IMR-90 (cell line): ENCODE measurements at regions of chr20 and their contacts with region 1.

Region 1: DNA sequence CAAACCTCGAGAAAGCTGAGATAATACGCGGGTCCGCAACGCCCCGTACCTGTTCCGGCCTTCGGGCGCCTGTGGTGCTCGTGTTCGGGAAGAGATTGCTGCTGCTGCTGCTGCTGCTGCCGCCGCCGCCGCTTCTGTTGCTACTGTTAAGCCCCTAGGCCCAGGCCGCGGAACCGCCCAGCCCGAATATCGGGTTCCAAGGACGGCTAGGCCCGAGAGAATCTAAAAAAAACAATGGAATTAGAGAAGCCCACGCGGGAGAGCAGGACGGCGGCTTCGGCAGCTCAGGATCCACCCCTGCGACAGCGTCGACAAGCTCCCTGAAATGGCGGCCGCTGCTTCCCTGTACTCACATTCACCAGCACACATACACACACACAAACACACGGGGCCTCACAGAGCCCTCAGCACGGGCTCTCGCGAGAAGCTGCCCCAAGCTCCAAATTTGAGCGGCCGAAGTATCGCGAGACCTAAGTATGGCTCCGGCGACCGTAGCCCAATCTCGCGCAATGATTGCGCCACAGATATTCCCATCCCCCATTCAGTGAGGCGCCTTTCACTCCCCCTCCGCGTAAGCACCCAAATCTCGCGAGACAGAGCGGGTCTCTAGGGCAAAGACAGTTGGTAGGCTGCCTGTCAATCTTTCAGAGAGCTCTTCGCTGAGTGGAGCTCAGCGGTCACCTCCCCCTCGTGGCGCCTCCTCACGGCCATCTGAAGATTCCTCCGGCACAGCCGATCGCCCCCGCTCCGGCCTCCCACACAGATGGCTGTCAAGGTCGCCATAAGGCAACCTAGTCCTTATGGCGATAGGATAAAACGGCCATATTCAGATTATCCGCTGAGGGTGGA is at the start of gene RBM39:
- DNase-seq: peak; percentile 100
- ATAC-seq: peak; percentile 93
- H3K4me3 ChIP-seq: peak within 1 kb of the TSS; percentile 74
- H3K27ac ChIP-seq: peak within 1 kb of the TSS; percentile 96
- H3K4me1 ChIP-seq: peaks cover 7% of the 10 kb centered on the region
- H3K27me3 ChIP-seq: no peaks in the 10 kb centered on the region
- CTCF ChIP-seq: peak; percentile 49
- POLR2A ChIP-seq: peak; percentile 98
- RAD21 ChIP-seq: no peak
- total RNA-seq, gene RBM39: 166 and 280 TPM in 2 replicates

Region 2: GRCh38 chr20:34516247-34517113 is 1225.6 kb before region 1 on chr20 and contains the start of gene DYNLRB1:
- CTCF ChIA-PET with region 1: no interaction called
- POLR2A ChIA-PET with region 1: no interaction called
- dilution Hi-C with region 1: no loop called
- in situ Hi-C with region 1: no loop called
- intact Hi-C with region 1: no loop called
- DNase-seq: peak; percentile 96
- ATAC-seq: peak; percentile 89
- H3K4me3 ChIP-seq: peak within 1 kb of the TSS; percentile 89
- H3K27ac ChIP-seq: peak within 1 kb of the TSS; percentile 95
- H3K4me1 ChIP-seq: peaks cover 7% of the 10 kb centered on the region; the same call in 1 of the 2 replicates
- H3K27me3 ChIP-seq: no peaks in the 10 kb centered on the region
- CTCF ChIP-seq: no peak
- POLR2A ChIP-seq: peak; percentile 90
- RAD21 ChIP-seq: no peak
- total RNA-seq, gene DYNLRB1: 78.0 and 82.4 TPM in 2 replicates

Region 3: DNA sequence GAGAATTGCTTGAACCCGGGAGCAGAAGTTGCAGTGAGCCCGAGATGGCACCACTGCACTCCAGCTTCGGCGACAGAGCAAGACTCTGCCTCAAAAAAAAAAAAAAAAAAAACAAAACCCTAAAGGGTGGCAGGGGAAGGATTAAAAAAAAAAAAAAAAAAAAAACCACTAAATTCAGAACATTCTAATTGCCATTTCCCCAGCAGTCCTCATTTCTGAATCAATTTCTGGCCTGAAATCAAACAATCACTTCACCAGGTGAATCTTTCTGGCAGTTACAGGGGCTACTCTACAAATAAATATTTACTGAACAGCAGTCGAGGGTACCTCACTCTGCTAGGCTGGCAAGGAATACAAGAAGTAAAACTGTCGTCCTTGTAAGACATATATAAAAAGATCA is 331.5 kb before region 1 on chr20:
- CTCF ChIA-PET with region 1: no interaction called
- POLR2A ChIA-PET with region 1: no interaction called
- dilution Hi-C with region 1: no loop called
- in situ Hi-C with region 1: no loop called
- intact Hi-C with region 1: no loop called
- DNase-seq: no peak
- ATAC-seq: no peak
- H3K4me3 ChIP-seq: peak overlapping the region; percentile 82; the same call in 1 of the 2 replicates
- H3K27ac ChIP-seq: no peak overlapping the region
- H3K4me1 ChIP-seq: no peaks in the 10 kb centered on the region
- H3K27me3 ChIP-seq: no peaks in the 10 kb centered on the region
- CTCF ChIP-seq: no peak
- POLR2A ChIP-seq: no peak
- RAD21 ChIP-seq: no peak

Region 4: DNA sequence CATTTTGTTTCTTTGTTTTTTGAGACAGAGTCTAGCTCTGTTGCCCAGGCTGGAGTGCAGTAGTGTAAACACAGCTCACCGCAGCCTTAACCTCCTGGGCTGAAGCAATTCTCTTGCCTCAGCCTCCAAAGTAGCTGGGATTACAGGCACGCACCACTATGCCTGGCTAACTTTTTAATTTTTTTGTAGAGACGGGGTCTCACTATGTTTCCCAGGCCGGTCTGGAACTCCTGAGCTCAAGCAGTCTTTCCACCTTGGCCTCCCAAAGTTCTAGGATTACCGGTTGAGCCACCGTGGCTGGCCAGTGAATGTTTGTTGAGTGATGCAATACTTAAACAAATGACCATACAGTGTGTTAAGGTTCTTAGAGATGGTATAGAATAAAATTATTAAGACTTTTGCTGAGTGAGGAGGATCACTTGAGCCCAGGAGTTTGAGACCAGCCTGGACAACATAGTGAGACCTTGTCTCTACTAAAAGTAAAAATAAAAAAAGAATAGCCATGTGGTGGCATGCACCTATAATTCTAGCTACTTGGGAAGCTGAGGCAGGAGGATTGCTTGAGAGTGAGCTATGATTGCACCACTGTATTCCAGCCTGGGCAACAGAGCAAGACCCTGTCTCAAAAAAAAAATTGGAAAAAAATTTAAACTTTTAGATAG is 273.3 kb before region 1 on chr20:
- CTCF ChIA-PET with region 1: no interaction called
- POLR2A ChIA-PET with region 1: no interaction called
- dilution Hi-C with region 1: no loop called
- in situ Hi-C with region 1: no loop called
- intact Hi-C with region 1: no loop called
- DNase-seq: peak; percentile 39
- ATAC-seq: 0 out of 2 replicates have a peak, but pooled peaks have one; percentile 27
- H3K4me3 ChIP-seq: no peak overlapping the region
- H3K27ac ChIP-seq: no peak overlapping the region
- H3K4me1 ChIP-seq: peaks cover 13% of the 10 kb centered on the region
- H3K27me3 ChIP-seq: no peaks in the 10 kb centered on the region
- CTCF ChIP-seq: no peak
- POLR2A ChIP-seq: no peak
- RAD21 ChIP-seq: no peak

Region 5: DNA sequence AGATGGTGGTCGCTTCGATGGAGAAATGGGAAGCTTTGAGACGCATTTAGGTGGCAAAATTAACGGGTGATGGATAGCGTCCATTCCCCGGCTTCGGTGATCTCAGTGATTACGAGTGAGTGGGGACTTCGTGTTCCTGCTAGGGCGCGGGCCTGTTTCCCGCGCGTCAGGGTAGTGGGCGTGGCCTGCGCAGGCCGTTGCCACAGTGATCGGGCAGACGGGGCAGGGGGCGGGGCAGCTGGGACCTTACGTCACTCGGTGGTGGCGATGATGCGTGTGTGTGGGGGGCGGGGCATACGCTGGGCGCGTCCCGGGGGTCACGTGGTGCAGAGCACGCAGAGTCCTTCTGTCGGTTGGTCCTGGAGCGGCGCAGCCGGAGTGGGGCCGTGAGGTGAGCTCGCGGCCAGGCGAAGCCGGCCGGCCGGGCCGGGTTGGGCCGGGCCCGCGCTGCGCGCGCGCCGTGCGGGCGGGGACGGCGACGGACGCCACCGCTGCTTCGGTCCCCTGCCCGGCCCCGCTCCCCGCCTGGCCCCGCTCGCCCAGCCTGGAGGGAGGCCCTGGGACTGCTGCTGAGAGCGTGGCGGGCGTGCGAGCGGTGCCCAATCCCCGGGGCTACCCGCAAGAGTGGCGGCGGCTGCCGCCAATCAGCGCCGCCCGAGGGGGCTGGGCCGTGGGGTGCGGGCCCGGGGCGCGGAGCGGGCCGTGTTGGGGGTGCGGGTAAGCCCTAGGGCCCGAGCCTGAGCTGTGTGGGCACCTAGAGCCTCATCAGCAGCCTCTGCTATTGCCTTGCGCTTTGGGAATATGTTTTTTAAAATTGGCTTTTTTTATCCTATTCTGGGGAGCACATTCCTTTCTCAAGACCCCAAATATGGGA is 29.8 kb after region 1 on chr20 and contains the start of gene PHF20:
- CTCF ChIA-PET with region 1: interaction called, 4 read pairs
- POLR2A ChIA-PET with region 1: interaction called, 13 read pairs
- dilution Hi-C with region 1: no loop called
- in situ Hi-C with region 1: no loop called
- intact Hi-C with region 1: loop called (anchors 2 kb)
- DNase-seq: peak; percentile 96
- ATAC-seq: peak; percentile 93
- H3K4me3 ChIP-seq: peak within 1 kb of the TSS; percentile 94
- H3K27ac ChIP-seq: peak within 1 kb of the TSS; percentile 79
- H3K4me1 ChIP-seq: peaks cover 21% of the 10 kb centered on the region
- H3K27me3 ChIP-seq: no peaks in the 10 kb centered on the region
- CTCF ChIP-seq: no peak
- POLR2A ChIP-seq: peak; percentile 84
- RAD21 ChIP-seq: no peak
- total RNA-seq, gene PHF20: 22.0 and 30.3 TPM in 2 replicates

Region 6: DNA sequence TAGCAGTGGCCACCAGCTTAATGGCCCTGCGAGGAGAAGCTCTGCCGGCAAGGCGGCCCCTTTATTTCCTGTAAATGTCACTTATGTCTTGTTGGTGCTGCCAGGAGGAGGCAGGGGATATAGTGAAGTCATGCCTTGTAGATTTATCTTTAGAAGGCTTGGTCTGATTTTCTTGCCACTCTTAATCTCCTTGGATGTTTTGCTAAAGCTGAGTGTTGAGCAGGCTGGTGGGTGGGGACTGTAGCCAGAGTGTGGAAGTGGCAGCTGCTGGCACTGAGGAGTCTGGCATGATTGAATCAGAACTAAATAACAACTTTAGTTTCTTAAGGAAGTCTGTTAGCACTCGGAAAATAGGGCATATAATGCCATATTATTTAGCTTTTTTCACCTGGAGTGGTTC is 107.6 kb after region 1 on chr20:
- CTCF ChIA-PET with region 1: no interaction called
- POLR2A ChIA-PET with region 1: interaction called, 10 read pairs
- dilution Hi-C with region 1: no loop called
- in situ Hi-C with region 1: no loop called
- intact Hi-C with region 1: no loop called
- DNase-seq: no peak
- ATAC-seq: peak; percentile 51
- H3K4me3 ChIP-seq: no peak overlapping the region
- H3K27ac ChIP-seq: no peak overlapping the region
- H3K4me1 ChIP-seq: peaks cover 5% of the 10 kb centered on the region
- H3K27me3 ChIP-seq: no peaks in the 10 kb centered on the region
- CTCF ChIP-seq: no peak
- POLR2A ChIP-seq: no peak
- RAD21 ChIP-seq: no peak

Region 7: DNA sequence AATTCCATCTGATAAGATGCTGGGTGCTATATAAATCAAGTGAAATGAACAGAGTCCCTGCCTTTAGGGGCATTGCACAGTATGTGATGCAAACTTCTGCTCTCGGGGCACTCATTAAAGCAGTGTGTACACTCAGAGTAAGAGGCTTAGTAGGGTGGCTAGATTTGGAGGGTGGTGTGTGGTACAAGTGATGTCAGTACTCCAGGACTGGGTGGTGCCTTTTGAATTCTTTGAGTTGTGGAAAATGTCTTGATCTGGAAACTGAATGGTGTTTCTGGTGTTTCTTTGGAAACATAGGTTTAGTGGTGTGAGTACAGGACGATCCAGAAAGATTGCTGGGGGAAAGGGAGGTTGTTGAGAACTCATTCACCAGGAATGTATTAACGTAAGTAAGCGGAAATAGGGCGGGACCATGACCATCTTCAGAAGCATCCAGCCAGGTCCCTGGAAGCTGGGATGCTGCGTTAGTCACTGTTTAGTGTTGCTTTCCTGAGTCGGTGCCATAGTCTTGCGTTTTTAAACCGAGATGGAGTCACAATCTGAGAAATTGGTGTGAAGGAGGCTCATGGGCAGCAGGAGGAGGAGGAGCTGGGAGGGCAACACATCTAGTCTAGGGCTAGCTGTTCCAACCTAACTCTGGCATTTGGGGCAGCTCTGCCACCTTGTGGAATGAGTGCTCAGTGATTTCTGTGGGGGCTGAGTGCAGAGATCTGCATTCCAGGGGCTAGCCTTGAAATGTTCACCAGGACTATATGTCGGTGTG is 141.8 kb after region 1 on chr20:
- CTCF ChIA-PET with region 1: interaction called, 6 read pairs
- POLR2A ChIA-PET with region 1: interaction called, 6 read pairs
- dilution Hi-C with region 1: no loop called
- in situ Hi-C with region 1: loop called (anchors 10 kb)
- intact Hi-C with region 1: loop called (anchors 1 kb)
- DNase-seq: peak; percentile 100
- ATAC-seq: peak; percentile 93
- H3K4me3 ChIP-seq: peak overlapping the region; percentile 4; the same call in 1 of the 2 replicates
- H3K27ac ChIP-seq: peak overlapping the region; percentile 81
- H3K4me1 ChIP-seq: peaks cover 15% of the 10 kb centered on the region
- H3K27me3 ChIP-seq: no peaks in the 10 kb centered on the region
- CTCF ChIP-seq: peak; percentile 87
- POLR2A ChIP-seq: peak; percentile 76
- RAD21 ChIP-seq: peak; percentile 91